Breast epithelium (tissue), 4 donors: ENCODE measurements at regions of chr12 and their contacts with region 1.

Region 1: DNA sequence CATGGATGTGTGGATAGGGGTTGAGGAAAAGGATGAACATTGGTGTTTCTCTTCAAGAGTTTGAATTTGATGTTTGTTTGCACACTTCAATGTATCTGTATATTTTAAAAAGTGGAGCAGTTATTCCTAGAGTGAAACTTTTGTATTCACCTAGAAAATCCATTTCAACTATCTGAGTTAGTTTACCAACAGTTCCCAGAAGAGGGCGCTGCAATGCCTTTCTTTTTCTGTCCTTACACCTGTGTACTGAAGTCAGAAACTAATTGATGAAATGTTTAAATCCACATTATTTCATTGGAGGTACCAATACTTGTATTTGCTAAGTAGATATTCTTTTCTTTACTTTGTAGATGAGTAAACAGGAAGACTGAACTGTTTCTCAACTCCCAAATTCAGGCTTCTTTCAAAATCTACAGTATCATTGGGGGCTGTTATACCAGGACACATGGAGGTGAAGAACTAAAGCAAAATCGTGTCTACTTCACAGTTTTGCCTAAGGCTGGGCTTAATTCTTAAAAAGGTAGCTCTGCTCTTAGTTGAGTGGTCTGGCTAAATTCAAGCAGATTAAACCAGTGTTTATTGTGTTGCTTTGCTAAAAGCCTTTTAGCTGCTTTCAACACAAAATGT is 26.6 kb upstream of the KLRB1 start:
- DNase-seq: peak in 1 of 2 donors; percentile 47
- H3K4me3 ChIP-seq: no peak overlapping the region
- H3K27ac ChIP-seq: no peak overlapping the region
- H3K4me1 ChIP-seq: no peaks in the 10 kb centered on the region
- H3K27me3 ChIP-seq: no peaks in the 10 kb centered on the region
- CTCF ChIP-seq: peak; percentile 61 to 74 (median 73)
- POLR2A ChIP-seq: no peak

Region 2: DNA sequence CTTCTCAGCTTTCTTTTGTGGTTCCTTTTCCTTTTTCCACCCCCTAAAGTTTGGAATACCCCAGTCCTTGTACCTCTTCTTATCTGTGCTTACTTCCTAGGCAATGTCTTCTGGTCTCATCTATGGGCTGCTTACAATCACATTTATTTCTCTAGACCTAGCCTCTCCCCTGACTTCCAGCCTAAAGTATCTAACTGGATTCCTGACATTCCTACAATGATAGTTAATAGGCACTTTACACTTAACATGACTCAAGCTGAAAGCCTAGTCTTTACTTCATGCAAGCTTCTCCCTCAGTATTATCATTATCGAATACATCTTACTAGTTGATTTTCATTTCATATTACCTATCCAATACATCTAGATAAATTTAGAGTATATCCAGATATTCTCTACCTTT is 77.4 kb after region 1 on chr12:
- intact Hi-C with region 1: loop called (anchors 10 kb)
- DNase-seq: no peak
- H3K4me3 ChIP-seq: no peak overlapping the region
- H3K27ac ChIP-seq: no peak overlapping the region
- H3K4me1 ChIP-seq: no peaks in the 10 kb centered on the region
- H3K27me3 ChIP-seq: no peaks in the 10 kb centered on the region
- CTCF ChIP-seq: no peak
- POLR2A ChIP-seq: no peak